HAP-1 (cell line): ENCODE measurements at regions of chr15 and their contacts with region 1.

Region 1: DNA sequence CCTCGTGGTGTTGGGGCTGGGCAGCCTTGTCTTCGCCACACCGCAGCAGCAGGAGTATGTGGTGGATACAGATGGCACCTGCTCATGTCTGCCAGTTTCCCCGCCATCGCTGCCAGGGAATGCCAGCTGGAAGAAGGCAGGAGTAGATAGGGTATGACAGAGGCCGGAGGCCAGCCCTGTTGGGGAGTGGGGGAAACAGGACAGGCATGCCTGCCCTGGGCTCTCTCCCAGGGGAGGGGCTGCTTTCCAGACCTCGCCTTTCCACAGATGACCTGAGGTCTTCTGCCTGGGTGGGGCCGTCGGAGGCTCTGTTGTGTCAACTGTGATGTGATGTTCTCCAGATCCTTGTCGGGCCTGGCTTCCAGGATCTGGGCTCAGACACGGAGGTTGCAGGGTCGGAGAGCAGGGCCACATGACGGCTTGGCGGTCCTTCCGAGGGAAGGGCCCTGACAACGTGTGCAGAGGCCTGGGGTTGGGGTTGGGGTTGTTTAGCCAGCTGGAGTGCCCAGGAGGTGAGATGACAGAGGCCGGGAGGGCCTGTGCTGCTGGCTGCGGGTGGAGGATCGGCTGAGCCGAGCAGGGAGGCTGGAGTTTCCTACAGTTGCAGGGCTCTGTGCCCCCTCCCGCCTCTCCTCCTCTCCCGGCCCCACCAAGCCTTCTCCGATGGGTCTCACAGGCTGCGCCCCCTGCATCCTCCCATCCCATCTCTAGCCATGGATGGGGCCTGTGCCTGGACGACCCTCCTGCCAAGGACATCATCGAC is 102.0 kb downstream of the TBC1D2B start:
- DNase-seq: peak in 1 of 2 experiments; percentile 12
- H3K4me3 ChIP-seq: no peak overlapping the region
- H3K4me1 ChIP-seq: no peaks in the 10 kb centered on the region
- H3K27me3 ChIP-seq: no peaks in the 10 kb centered on the region

Region 2: DNA sequence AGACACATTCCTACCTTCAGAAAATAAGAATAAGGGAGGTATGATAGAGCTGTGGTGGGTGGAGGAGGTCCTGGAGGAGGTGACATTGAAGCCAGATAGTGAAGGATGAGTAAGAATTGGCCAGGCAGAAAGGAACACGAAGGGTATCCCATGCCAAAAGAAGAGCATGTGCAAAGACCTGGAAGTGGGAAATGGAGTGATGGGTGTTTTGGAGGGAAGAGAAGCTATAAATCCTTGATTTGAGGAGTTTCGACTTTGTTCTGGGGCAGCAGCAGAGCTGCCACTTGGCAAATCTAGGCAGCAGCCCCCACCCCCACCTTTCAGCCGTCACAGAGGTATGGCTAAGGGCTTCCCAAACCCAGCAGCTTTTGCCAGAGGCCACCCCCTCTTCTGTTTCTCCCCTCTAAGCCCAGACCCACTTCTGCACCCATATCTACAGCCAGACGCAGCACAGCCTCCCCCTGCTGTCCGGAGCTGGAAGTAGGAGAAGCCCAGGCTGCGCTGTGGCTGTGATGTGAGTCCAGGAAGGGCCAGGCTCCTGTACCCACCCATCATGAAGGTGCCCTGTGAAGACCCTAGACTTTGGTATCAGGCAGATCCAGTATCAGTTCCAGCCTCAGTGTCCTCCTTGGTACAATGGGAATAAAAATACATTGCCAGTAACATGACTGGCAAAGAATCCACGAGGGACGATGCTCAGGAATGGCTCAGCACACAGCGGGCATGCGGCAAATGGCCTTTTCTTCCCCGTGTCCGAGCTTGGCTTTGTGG is 154.1 kb before region 1 on chr15:
- in situ Hi-C with region 1: no loop called
- DNase-seq: peak; percentile 74 to 90
- H3K4me3 ChIP-seq: no peak overlapping the region
- H3K4me1 ChIP-seq: no peaks in the 10 kb centered on the region; the same call in 1 of the 2 replicates
- H3K27me3 ChIP-seq: peaks cover 32% of the 10 kb centered on the region

Region 3: GRCh38 chr15:78778422-78778821 is 802.9 kb after region 1 on chr15:
- in situ Hi-C with region 1: loop called (anchors 5 kb)
- DNase-seq: no peak
- H3K4me3 ChIP-seq: no peak overlapping the region
- H3K4me1 ChIP-seq: no peaks in the 10 kb centered on the region
- H3K27me3 ChIP-seq: no peaks in the 10 kb centered on the region